Activated CD4-positive, alpha-beta memory T cell treated with anti-CD3 and anti-CD28 coated beads for 36 hours (primary cell): ENCODE measurements at regions of chr10 and their contacts with region 1.

Region 1: GRCh38 chr10:128035557-128035973 is 90.7 kb downstream of the MKI67 start:
- DNase-seq: peak; percentile 78
- H3K4me3 Mint-ChIP-seq: no peak overlapping the region
- H3K27ac Mint-ChIP-seq: no peak overlapping the region
- H3K4me1 Mint-ChIP-seq: peaks cover 9% of the 10 kb centered on the region
- H3K27me3 Mint-ChIP-seq: no peaks in the 10 kb centered on the region

Region 2: GRCh38 chr10:128018236-128018635 is 17.3 kb before region 1 on chr10:
- CTCF ChIA-PET with region 1: interaction called, 14 read pairs
- POLR2A ChIA-PET with region 1: no interaction called
- intact Hi-C with region 1: no loop called
- DNase-seq: no peak
- H3K4me3 Mint-ChIP-seq: no peak overlapping the region
- H3K27ac Mint-ChIP-seq: no peak overlapping the region
- H3K4me1 Mint-ChIP-seq: peaks cover 8% of the 10 kb centered on the region
- H3K27me3 Mint-ChIP-seq: peaks cover 3% of the 10 kb centered on the region

Region 3: GRCh38 chr10:128064108-128064969 is 28.8 kb after region 1 on chr10:
- CTCF ChIA-PET with region 1: interaction called, 244 read pairs
- POLR2A ChIA-PET with region 1: interaction called, 6 read pairs
- intact Hi-C with region 1: loop called (anchors 1 kb)
- DNase-seq: peak; percentile 91
- H3K4me3 Mint-ChIP-seq: peak overlapping the region; percentile 59
- H3K27ac Mint-ChIP-seq: peak overlapping the region; percentile 96
- H3K4me1 Mint-ChIP-seq: peaks cover 58% of the 10 kb centered on the region
- H3K27me3 Mint-ChIP-seq: no peaks in the 10 kb centered on the region

Region 4: DNA sequence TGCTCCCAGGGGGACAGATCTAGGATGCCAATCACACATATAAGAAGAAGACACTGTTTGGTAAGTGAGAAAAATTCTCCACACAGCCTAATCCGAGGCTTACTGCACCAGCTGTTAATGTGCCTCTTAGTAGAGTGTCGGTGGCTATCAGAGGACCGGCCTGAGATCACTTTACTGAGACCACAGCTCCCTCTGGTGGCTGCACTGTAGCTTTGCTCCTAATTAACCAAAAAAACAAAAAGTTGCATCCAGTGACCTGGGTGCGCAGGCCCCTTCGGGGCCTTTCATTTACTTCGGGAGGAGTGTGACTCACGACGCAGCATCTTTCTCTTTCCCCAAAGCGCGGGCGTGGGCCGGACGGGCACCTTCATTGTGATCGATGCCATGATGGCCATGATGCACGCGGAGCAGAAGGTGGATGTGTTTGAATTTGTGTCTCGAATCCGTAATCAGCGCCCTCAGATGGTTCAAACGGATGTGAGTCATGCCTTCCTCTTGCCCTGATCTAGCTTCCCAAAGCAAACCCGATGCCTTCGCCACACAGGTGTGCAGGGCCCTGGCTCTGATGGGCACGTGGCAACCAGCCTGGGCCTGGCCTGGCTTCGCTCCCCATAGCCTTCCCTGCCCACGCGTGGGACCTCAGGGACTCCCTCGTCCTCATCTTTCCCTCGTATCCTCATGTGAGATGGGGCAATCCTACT is 33.9 kb after region 1 on chr10:
- CTCF ChIA-PET with region 1: interaction called, 244 read pairs
- POLR2A ChIA-PET with region 1: interaction called, 6 read pairs
- intact Hi-C with region 1: loop called (anchors 1 kb)
- DNase-seq: peak; percentile 86
- H3K4me3 Mint-ChIP-seq: no peak overlapping the region
- H3K27ac Mint-ChIP-seq: no peak overlapping the region
- H3K4me1 Mint-ChIP-seq: peaks cover 35% of the 10 kb centered on the region
- H3K27me3 Mint-ChIP-seq: no peaks in the 10 kb centered on the region

Region 5: DNA sequence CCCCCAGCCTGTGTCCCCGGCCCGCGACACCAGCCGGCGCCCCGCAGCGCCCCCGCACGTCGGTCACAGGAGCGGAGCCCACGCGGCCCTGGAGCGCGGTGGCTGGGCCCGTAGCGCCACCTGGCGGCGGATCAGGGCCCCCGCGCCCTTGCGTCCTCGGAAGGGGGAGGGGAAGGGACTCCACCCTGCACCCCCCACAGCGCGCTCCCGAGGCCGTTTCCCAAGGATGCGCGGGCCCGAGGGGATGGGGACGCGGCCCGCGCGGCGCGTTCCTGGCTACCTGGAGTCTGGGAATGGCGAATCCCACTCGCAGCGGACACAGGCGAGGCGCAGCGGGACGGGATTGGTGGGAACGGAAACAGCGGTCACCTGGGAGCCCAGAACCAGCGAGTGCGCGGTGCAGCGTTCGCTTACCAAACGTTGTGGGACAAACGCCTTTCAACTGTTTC is 114.5 kb after region 1 on chr10:
- CTCF ChIA-PET with region 1: interaction called, 18 read pairs
- POLR2A ChIA-PET with region 1: no interaction called
- intact Hi-C with region 1: loop called (anchors 5 kb)
- DNase-seq: peak; percentile 82
- H3K4me3 Mint-ChIP-seq: peak overlapping the region; percentile 72
- H3K27ac Mint-ChIP-seq: no peak overlapping the region
- H3K4me1 Mint-ChIP-seq: peaks cover 20% of the 10 kb centered on the region
- H3K27me3 Mint-ChIP-seq: no peaks in the 10 kb centered on the region